Right ventricle myocardium inferior (tissue), 1 donor: ENCODE measurements at regions of chr19 and their contacts with region 1.

Region 1: DNA sequence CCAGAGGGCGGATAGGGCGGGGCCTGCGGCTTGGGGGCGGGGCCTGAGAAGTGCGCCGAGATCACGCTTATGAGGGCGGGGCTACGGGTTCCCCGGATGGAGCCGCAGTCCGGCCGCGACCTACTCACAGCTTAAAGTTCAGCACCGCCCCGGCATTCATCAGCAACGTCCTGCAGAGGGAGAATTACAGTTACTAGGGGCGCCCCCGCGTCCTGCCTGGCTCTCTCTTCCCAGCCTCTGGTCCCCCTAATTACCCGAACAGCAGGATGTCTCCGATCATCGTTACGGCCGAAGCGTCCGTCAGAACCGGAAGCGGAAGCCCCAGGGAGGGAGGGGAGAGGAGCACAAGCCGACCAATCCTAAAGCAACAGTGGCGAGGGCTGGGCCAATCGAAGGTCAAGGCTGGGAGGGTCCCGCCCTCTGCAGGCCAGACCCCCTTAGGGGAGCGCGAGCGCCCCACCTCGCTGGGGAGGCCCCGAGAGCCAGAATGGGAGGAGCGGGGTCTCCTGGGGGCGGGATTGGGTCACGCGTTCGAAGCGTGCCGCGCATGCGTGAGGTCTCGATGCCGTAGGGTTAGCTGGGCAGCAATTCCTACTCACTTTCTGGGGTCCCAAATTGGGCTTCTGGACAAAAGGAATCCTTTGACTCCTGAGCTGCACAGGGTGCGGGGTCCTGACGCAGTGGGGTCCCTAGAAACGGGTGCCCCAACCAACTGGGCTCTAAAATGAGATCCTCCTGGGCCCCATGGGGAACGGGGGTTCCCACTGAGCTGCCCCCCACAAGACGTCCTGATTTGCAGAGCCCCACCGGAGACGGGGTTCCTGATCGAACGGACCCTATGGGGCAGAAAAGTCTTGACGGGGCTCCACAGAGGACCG is at the start of gene SMIM7:
- DNase-seq: peak; percentile 99
- ATAC-seq: peak; percentile 98
- total RNA-seq, gene SMIM7: 30.8 TPM

Region 2: GRCh38 chr19:15812060-15812682 is 847.9 kb before region 1 on chr19:
- intact Hi-C with region 1: no loop called
- DNase-seq: no peak
- ATAC-seq: no peak

Region 3: GRCh38 chr19:16509141-16510061 is 150.7 kb before region 1 on chr19:
- intact Hi-C with region 1: no loop called
- DNase-seq: no peak
- ATAC-seq: peak; percentile 87

Region 4: DNA sequence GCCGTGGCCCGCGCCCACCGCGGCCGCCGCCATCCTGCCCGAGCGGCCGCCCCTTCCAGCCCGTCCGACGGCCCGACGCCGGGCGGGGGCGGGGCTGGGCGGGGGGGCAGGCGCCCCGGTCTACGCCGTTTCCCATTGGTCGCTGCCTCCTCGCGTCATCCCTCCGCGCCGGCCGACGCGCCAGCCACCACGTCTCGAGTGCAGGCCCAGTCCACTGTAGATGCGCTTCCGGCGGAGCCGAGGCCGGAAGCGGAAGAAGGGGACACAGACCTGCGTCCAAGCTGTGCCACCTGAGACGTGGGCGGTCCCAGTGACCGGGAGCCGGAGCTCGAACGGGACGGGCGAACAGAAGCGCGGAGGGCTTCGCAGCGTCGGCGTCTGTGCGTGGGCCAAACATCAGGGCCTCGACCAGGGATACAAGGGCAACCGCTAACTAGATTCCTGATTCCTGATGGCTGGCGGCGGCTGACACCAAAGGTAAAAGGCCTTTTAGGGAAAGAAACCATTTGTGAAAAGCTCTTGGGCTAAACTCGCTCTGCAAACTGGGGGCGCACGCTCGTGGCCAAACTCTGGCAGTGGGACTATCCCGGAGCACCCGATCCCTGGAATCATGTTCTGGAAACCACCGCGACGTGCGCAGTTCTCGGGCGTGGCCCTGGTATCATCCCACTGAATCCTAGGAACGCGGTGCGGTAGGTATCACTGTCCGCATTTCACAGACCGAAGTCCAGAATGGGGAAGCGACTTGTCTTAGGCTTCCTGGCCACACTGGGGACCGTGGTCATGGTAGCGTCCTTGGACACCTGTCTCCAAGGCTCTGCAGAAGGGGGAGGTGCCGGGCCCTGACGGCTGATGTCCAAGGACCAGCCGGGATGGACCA is 87.5 kb before region 1 on chr19 and contains the start of gene SLC35E1:
- intact Hi-C with region 1: loop called (anchors 2 kb)
- DNase-seq: peak; percentile 97
- ATAC-seq: peak; percentile 97
- total RNA-seq, gene SLC35E1: 23.5 TPM

Region 5: GRCh38 chr19:16628183-16628983 is 31.7 kb before region 1 on chr19 and contains the start of gene MED26:
- intact Hi-C with region 1: loop called (anchors 2 kb)
- DNase-seq: peak; percentile 98
- ATAC-seq: peak; percentile 94
- total RNA-seq, gene MED26: 6.1 TPM

Region 6: GRCh38 chr19:16702118-16702517 is 42.0 kb after region 1 on chr19:
- intact Hi-C with region 1: loop called (anchors 5 kb)
- DNase-seq: no peak
- ATAC-seq: peak; percentile 89